ENCODE measurements at regions of chr1 and their contacts with region 1.

Region 1: GRCh38 chr1:158941317-158941716 is 10.0 kb downstream of the PYHIN1 start:
- DNase-seq: no peak
- H3K4me3 ChIP-seq: no peak overlapping the region
- H3K4me3 Mint-ChIP-seq: no peak overlapping the region
- H3K27ac Mint-ChIP-seq: no peak overlapping the region
- H3K4me1 ChIP-seq: no peaks in the 10 kb centered on the region
- H3K4me1 Mint-ChIP-seq: no peaks in the 10 kb centered on the region
- H3K27me3 ChIP-seq: no peaks in the 10 kb centered on the region
- H3K27me3 Mint-ChIP-seq: peaks cover 12% of the 10 kb centered on the region
- CTCF ChIP-seq: no peak

Region 2: GRCh38 chr1:158901623-158902022 is 39.7 kb before region 1 on chr1:
- CTCF ChIA-PET with region 1: no interaction called
- POLR2A ChIA-PET with region 1: no interaction called
- intact Hi-C with region 1: no loop called
- DNase-seq: no peak
- H3K4me3 ChIP-seq: no peak overlapping the region
- H3K4me3 Mint-ChIP-seq: no peak overlapping the region
- H3K27ac Mint-ChIP-seq: no peak overlapping the region
- H3K4me1 ChIP-seq: no peaks in the 10 kb centered on the region
- H3K4me1 Mint-ChIP-seq: no peaks in the 10 kb centered on the region
- H3K27me3 ChIP-seq: no peaks in the 10 kb centered on the region
- H3K27me3 Mint-ChIP-seq: peaks cover 3% of the 10 kb centered on the region
- CTCF ChIP-seq: no peak

Region 3: GRCh38 chr1:158924677-158925076 is 16.6 kb before region 1 on chr1:
- CTCF ChIA-PET with region 1: no interaction called
- POLR2A ChIA-PET with region 1: no interaction called
- intact Hi-C with region 1: loop called (anchors 1 kb)
- DNase-seq: no peak
- H3K4me3 ChIP-seq: no peak overlapping the region
- H3K4me3 Mint-ChIP-seq: no peak overlapping the region
- H3K27ac Mint-ChIP-seq: no peak overlapping the region
- H3K4me1 ChIP-seq: no peaks in the 10 kb centered on the region
- H3K4me1 Mint-ChIP-seq: no peaks in the 10 kb centered on the region
- H3K27me3 ChIP-seq: no peaks in the 10 kb centered on the region
- H3K27me3 Mint-ChIP-seq: no peaks in the 10 kb centered on the region
- CTCF ChIP-seq: no peak

Region 4: GRCh38 chr1:159664247-159664646 is 722.9 kb after region 1 on chr1:
- CTCF ChIA-PET with region 1: no interaction called
- POLR2A ChIA-PET with region 1: no interaction called
- intact Hi-C with region 1: no loop called
- DNase-seq: no peak
- H3K4me3 ChIP-seq: no peak overlapping the region
- H3K4me3 Mint-ChIP-seq: no peak overlapping the region
- H3K27ac Mint-ChIP-seq: no peak overlapping the region
- H3K4me1 ChIP-seq: no peaks in the 10 kb centered on the region
- H3K4me1 Mint-ChIP-seq: no peaks in the 10 kb centered on the region
- H3K27me3 ChIP-seq: no peaks in the 10 kb centered on the region
- H3K27me3 Mint-ChIP-seq: peaks cover 14% of the 10 kb centered on the region
- CTCF ChIP-seq: no peak